ENCODE measurements at regions of chr1 and their contacts with region 1.

Region 1: DNA sequence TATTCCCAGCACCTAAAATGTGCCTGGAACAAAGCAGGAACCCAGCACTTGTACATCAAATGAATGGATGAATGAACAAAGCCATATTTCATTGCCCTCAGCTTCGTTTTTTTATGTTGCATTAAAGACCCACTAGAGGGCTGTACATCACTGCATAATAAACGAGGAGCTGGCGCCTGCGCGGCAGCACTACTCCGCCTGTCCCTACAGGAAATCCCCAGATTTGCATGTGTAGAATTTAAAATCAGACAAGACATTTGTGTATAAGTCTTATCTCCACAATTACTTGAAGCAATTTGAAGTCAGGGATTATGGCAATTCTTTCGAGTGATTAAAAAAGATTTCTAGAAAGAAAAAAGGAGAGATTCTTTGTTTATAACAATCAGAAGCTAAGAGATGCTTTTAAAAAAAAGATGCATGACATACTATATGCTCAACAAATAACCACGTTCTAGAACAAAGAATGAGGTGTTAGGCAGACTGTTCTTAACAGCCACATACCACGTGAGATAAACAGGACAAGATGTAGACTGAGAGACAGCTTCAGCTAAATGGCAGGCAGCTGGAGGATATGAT is 5.4 kb upstream of the NEK2 start:
- DNase-seq: peak; percentile 72
- H3K4me3 ChIP-seq: no peak overlapping the region
- H3K27ac ChIP-seq: no peak overlapping the region
- H3K4me1 ChIP-seq: peaks cover 7% of the 10 kb centered on the region
- H3K27me3 ChIP-seq: no peaks in the 10 kb centered on the region
- CTCF ChIP-seq: peak; percentile 73

Region 2: DNA sequence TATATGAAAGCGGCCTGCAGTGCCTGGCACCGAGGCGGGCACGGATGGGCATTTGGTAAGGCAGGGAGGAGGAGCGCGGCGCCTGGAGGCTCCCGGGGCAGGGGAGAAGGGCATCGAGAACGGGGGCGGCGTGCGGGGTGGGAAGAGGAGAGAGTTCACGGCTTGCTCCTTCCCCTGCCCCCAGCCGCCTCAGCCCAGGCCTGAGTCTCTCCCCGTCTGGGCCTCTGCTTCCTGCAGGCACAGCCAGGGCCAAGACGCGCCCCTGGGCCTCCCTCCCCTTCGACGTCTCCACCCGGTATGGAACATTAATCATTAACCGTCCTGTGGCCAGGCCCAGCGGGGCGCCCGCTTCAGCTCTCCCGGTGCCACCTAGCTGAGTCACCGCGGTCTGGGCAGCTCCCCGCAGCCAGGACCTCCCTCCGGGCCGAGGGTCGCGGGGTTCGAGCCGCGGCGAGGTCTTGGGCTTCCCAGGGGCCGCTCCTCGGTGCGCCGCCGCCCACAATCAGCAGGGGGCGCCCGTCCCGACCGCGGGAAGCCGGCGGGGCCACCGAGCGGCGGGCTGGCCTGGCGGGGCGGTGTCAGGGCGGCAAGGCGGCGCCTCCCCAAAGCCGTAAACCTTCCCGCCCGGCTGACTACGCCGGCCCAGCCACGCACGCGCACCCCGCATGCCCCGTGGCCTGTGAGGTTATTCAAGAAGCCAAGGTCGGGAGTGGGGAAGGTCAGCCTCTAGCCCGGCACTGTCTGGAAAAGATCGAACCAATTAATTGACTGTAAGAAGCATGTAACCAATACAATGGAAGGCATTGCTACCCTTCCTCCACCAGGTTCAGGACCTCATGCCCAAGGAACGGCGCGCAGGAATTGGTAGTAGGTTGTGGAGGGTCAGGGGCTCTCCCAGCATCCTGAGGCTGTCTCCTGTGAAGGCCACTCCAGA is 165.5 kb before region 1 on chr1:
- CTCF ChIA-PET with region 1: no interaction called
- dilution Hi-C with region 1: no loop called
- in situ Hi-C with region 1: no loop called
- intact Hi-C with region 1: no loop called
- DNase-seq: peak; percentile 92
- H3K4me3 ChIP-seq: peak overlapping the region; percentile 13 to 38 (median 19)
- H3K27ac ChIP-seq: no peak overlapping the region
- H3K4me1 ChIP-seq: peaks cover 45% of the 10 kb centered on the region
- H3K27me3 ChIP-seq: no peaks in the 10 kb centered on the region
- CTCF ChIP-seq: peak; percentile 38 to 66

Region 3: DNA sequence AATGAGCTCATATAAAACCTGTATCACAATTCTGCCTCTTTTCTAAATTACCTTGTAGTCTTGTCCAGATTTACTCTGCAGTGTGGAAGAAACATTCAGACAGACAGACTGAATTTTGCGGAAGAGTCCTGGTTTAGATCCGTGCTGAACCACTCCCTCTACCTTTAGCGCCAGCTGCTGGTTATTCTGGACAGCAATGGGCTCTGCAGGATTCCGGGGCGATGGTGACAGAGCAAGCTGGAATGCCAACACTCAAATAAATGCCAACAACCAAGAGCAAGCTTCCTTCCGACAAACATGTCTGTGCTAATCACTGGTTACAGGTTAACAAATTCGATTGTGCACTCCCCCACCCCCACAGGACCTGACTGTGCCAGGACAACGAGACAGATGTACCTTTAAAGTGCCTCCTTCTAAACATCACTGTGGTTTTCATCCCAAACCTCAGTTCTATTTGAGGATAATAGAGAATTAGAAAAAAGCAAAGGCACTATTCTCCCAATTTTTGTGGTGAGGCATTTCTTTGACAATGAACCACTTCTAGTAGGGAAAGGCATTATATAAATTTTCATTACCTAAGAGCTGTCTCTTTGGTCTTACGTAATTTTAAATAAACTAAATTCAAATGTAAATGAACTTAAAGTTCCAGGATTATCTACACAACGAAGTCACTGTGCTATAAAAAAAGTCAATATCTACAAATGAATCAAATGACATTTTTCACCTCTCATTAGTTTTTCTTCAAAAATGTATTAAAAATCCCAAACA is 264.1 kb after region 1 on chr1:
- CTCF ChIA-PET with region 1: interaction called, 20 read pairs
- dilution Hi-C with region 1: no loop called
- in situ Hi-C with region 1: no loop called
- intact Hi-C with region 1: no loop called
- DNase-seq: peak; percentile 93
- H3K4me3 ChIP-seq: no peak overlapping the region
- H3K27ac ChIP-seq: peak overlapping the region; percentile 5
- H3K4me1 ChIP-seq: peaks cover 14% of the 10 kb centered on the region
- H3K27me3 ChIP-seq: no peaks in the 10 kb centered on the region
- CTCF ChIP-seq: peak; percentile 97 to 98

Region 4: GRCh38 chr1:212062832-212063438 is 382.1 kb after region 1 on chr1:
- CTCF ChIA-PET with region 1: no interaction called
- dilution Hi-C with region 1: no loop called
- in situ Hi-C with region 1: no loop called
- intact Hi-C with region 1: loop called (anchors 1 kb)
- DNase-seq: peak; percentile 9
- H3K4me3 ChIP-seq: no peak overlapping the region
- H3K27ac ChIP-seq: no peak overlapping the region
- H3K4me1 ChIP-seq: no peaks in the 10 kb centered on the region
- H3K27me3 ChIP-seq: no peaks in the 10 kb centered on the region
- CTCF ChIP-seq: peak; percentile 54 to 67

Region 5: GRCh38 chr1:212315907-212316306 is 635.1 kb after region 1 on chr1:
- CTCF ChIA-PET with region 1: interaction called, 11 read pairs
- dilution Hi-C with region 1: no loop called
- in situ Hi-C with region 1: no loop called
- intact Hi-C with region 1: no loop called
- DNase-seq: peak; percentile 34
- H3K4me3 ChIP-seq: no peak overlapping the region
- H3K27ac ChIP-seq: no peak overlapping the region
- H3K4me1 ChIP-seq: peaks cover 3% of the 10 kb centered on the region
- H3K27me3 ChIP-seq: no peaks in the 10 kb centered on the region
- CTCF ChIP-seq: peak; percentile 31 to 51

Region 6: GRCh38 chr1:212455803-212456528 is 775.1 kb after region 1 on chr1:
- CTCF ChIA-PET with region 1: interaction called, 15 read pairs
- dilution Hi-C with region 1: no loop called
- in situ Hi-C with region 1: no loop called
- intact Hi-C with region 1: loop called (anchors 1 kb)
- DNase-seq: peak; percentile 37
- H3K4me3 ChIP-seq: no peak overlapping the region
- H3K27ac ChIP-seq: no peak overlapping the region
- H3K4me1 ChIP-seq: no peaks in the 10 kb centered on the region
- H3K27me3 ChIP-seq: no peaks in the 10 kb centered on the region
- CTCF ChIP-seq: peak; percentile 90 to 98

Measured in mammary epithelial cell (primary cell).